ENCODE measurements at regions of chr6 and their contacts with region 1.

Region 1: GRCh38 chr6:116268589-116269293 is 11.0 kb downstream of the TSPYL1 start:
- DNase-seq: no peak
- H3K4me3 ChIP-seq: peak overlapping the region in 1 of 59 donors; percentile 16
- H3K27ac ChIP-seq: no peak overlapping the region
- H3K27me3 ChIP-seq: no peaks in the 10 kb centered on the region
- CTCF ChIP-seq: peak; percentile 35 to 91 (median 80)

Region 2: DNA sequence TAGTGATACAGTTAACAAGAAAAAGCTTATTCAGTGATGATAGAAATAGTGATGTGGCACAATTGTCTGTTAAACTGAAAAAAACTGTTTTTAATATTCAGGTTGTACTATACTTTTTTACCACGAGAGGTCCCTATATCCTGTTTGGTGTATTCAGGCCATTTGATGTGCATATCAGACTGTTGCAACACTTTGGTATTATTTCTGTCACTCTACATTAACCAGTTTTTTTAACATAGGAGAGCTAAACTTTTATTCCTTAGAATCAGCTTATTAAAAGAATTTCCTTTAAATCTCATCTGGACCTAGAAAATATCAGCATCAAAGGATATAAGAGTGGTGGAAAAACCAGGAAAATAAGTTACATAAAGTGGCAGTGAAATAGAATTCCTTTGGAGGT is 51.7 kb before region 1 on chr6:
- intact Hi-C with region 1: loop called in 1 of 2 experiments (anchors 5 kb)
- DNase-seq: no peak
- H3K4me3 ChIP-seq: peak overlapping the region in 46 of 59 donors; percentile 2 to 56 (median 28)
- H3K27ac ChIP-seq: peak overlapping the region in 51 of 59 donors; percentile 7 to 78 (median 60)
- H3K27me3 ChIP-seq: no peaks in the 10 kb centered on the region
- CTCF ChIP-seq: peak; percentile 49 to 79 (median 67)

Region 3: GRCh38 chr6:116314878-116315277 is 46.1 kb after region 1 on chr6:
- intact Hi-C with region 1: no loop called
- DNase-seq: no peak
- H3K4me3 ChIP-seq: no peak overlapping the region
- H3K27ac ChIP-seq: no peak overlapping the region
- H3K27me3 ChIP-seq: no peaks in the 10 kb centered on the region
- CTCF ChIP-seq: no peak

Measured in dorsolateral prefrontal cortex (tissue), 120 donors.